Activated B cell treated with CpG ODN at 0.5 μM for 24 hours (primary cell): ENCODE measurements at regions of chr22 and their contacts with region 1.

Region 1: DNA sequence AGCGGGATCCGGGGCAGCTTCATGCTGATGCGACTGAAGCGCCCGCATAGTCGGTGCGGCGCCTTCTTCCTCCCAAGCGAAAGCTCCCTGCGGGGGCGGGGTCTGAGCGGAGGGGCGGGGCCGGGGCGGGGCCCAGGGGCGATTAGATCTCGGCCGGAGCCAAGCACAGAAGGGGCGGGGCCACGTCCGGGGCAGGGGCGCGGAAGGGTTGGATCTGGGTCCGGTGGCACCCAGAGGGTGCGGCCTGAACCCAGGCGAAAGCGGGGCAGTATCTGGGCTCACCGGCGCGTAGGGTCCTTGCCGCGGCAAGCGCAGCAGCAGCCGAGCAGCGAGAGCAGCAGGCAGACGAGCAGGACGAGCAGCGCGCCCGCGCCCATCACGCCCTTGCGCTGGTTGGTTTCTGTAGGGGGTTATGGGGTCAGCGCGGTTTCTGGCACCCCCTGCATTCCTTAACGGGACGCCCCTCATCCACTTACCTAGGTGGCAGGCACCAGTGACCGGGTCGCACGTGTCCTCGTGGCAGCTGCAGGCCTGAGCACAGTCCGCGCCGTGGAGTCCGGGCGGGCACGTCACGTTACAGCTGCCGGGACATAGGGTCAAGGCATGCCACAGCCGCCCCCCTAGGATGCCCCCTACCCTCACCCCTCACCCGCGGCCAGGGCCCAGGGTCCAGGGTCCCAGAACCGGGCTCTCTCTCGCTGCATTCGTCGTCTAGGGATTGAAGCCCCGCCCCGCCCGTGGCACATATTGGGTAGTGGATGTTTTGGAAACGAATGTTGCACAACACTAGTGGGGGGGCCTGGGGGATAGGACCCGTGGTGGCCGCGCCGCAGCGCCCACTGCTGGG is 8.1 kb downstream of the SCARF2 start:
- DNase-seq: peak; percentile 77
- ATAC-seq: peak; percentile 83
- H3K4me3 Mint-ChIP-seq: peak overlapping the region; percentile 85
- H3K27ac Mint-ChIP-seq: no peak overlapping the region
- H3K4me1 Mint-ChIP-seq: peaks cover 25% of the 10 kb centered on the region
- H3K27me3 Mint-ChIP-seq: peaks cover 32% of the 10 kb centered on the region
- CTCF ChIP-seq: no peak

Region 2: GRCh38 chr22:20456064-20456721 is 26.7 kb after region 1 on chr22:
- CTCF ChIA-PET with region 1: interaction called, 4 read pairs
- POLR2A ChIA-PET with region 1: interaction called, 3 read pairs
- intact Hi-C with region 1: loop called (anchors 1 kb)
- DNase-seq: peak; percentile 60
- ATAC-seq: peak; percentile 100
- H3K4me3 Mint-ChIP-seq: no peak overlapping the region
- H3K27ac Mint-ChIP-seq: no peak overlapping the region
- H3K4me1 Mint-ChIP-seq: peaks cover 20% of the 10 kb centered on the region
- H3K27me3 Mint-ChIP-seq: no peaks in the 10 kb centered on the region
- CTCF ChIP-seq: no peak

Region 3: GRCh38 chr22:20463324-20464095 is 34.0 kb after region 1 on chr22:
- CTCF ChIA-PET with region 1: interaction called, 3 read pairs
- POLR2A ChIA-PET with region 1: interaction called, 6 read pairs
- intact Hi-C with region 1: loop called (anchors 1 kb)
- DNase-seq: peak; percentile 29
- ATAC-seq: peak; percentile 76
- H3K4me3 Mint-ChIP-seq: peak overlapping the region; percentile 49
- H3K27ac Mint-ChIP-seq: peak overlapping the region; percentile 99
- H3K4me1 Mint-ChIP-seq: peaks cover 47% of the 10 kb centered on the region
- H3K27me3 Mint-ChIP-seq: no peaks in the 10 kb centered on the region
- CTCF ChIP-seq: no peak